Left lung (tissue), 14 donors: ENCODE measurements at regions of chr14 and their contacts with region 1.

Region 1: GRCh38 chr14:61489932-61490331 is 168.6 kb downstream of the PRKCH start:
- DNase-seq: peak in 1 of 4 donors; percentile 86
- ATAC-seq: peak; percentile 50
- H3K4me3 ChIP-seq: no peak overlapping the region
- H3K27ac ChIP-seq: peak overlapping the region; percentile 67 to 91
- H3K4me1 ChIP-seq: peaks cover 3 to 80% of the 10 kb centered on the region in 2 donors
- H3K27me3 ChIP-seq: no peaks in the 10 kb centered on the region
- CTCF ChIP-seq: no peak

Region 2: GRCh38 chr14:61218767-61219166 is 271.2 kb before region 1 on chr14:
- intact Hi-C with region 1: no loop called
- DNase-seq: no peak
- ATAC-seq: no peak
- H3K4me3 ChIP-seq: no peak overlapping the region
- H3K27ac ChIP-seq: no peak overlapping the region
- H3K4me1 ChIP-seq: no peaks in the 10 kb centered on the region
- H3K27me3 ChIP-seq: peaks cover 0 to 46% of the 10 kb centered on the region in 2 donors
- CTCF ChIP-seq: no peak

Region 3: GRCh38 chr14:61537563-61538463 is 47.9 kb after region 1 on chr14:
- intact Hi-C with region 1: loop called in 1 of 2 experiments (anchors 10 kb)
- DNase-seq: peak in 2 of 4 donors; percentile 66 to 77
- ATAC-seq: peak; percentile 83
- H3K4me3 ChIP-seq: no peak overlapping the region
- H3K27ac ChIP-seq: peak overlapping the region; percentile 41 to 69
- H3K4me1 ChIP-seq: peaks cover 22 to 54% of the 10 kb centered on the region in 2 donors
- H3K27me3 ChIP-seq: no peaks in the 10 kb centered on the region
- CTCF ChIP-seq: no peak